ENCODE measurements at regions of chr6 and their contacts with region 1.

Region 1: GRCh38 chr6:65248101-65248610 is 458.9 kb downstream of the EYS start:
- DNase-seq: no peak
- ATAC-seq: no peak
- H3K4me3 ChIP-seq: no peak overlapping the region
- H3K4me3 Mint-ChIP-seq: no peak overlapping the region
- H3K27ac ChIP-seq: no peak overlapping the region
- H3K27ac Mint-ChIP-seq: no peak overlapping the region
- H3K4me1 ChIP-seq: no peaks in the 10 kb centered on the region
- H3K4me1 Mint-ChIP-seq: no peaks in the 10 kb centered on the region
- H3K27me3 ChIP-seq: no peaks in the 10 kb centered on the region
- H3K27me3 Mint-ChIP-seq: no peaks in the 10 kb centered on the region
- CTCF ChIP-seq: no peak

Region 2: DNA sequence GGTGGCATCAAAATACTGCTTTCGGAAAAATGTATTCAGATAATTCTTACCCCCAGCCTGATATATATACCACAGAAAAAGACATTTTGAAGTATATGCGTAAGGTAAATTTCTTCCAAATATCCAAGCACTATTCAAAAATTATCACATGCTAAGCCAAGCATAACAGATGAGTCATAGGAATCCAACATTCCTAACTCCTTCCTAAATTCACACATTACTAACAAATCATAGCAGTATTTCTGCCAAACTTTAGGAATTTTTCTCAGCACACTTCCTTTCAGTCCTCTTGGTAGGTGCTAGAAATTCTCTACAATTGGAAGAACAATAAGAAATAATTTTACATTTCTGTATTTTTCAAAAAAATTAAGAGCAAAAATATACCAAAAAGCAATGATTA is 41.3 kb after region 1 on chr6:
- CTCF ChIA-PET with region 1: no interaction called
- POLR2A ChIA-PET with region 1: no interaction called
- intact Hi-C with region 1: loop called in 1 of 2 experiments (anchors 1 kb)
- DNase-seq: no peak
- ATAC-seq: no peak
- H3K4me3 ChIP-seq: no peak overlapping the region
- H3K4me3 Mint-ChIP-seq: no peak overlapping the region
- H3K27ac ChIP-seq: no peak overlapping the region
- H3K27ac Mint-ChIP-seq: no peak overlapping the region
- H3K4me1 ChIP-seq: no peaks in the 10 kb centered on the region
- H3K4me1 Mint-ChIP-seq: no peaks in the 10 kb centered on the region
- H3K27me3 ChIP-seq: no peaks in the 10 kb centered on the region
- H3K27me3 Mint-ChIP-seq: no peaks in the 10 kb centered on the region
- CTCF ChIP-seq: no peak